ENCODE measurements at regions of chr11 and their contacts with region 1.

Region 1: DNA sequence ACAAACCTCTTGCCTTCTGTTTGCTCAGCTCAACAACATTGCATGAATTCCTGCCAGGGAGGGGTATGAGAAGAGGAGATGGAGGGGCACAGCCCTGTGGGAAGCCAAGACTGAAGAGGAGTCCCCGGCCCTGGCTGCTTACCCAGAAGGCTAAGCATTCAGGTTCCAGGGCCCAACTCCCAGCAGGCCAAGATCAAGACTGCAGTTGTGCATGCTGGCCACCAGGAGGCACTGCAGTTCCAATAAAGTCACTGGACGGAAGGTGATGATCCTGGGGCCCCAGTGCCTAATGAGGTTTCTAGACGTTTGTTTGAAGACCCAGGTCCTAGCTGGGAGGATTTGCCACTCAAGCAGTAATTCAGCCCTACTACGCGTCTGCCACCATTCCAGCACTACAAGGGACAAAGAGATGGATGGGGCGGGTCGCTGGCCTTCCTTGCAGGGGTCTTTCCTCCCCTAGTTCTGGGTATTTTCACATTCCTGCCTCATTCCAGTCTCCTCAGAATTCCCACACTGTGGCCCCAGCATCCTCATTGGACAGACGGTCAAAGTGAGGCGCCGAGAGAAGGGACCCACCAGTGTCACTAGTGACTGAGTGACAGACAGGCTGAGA is 23.6 kb downstream of the ALX4 start:
- DNase-seq: peak; percentile 38
- H3K4me3 Mint-ChIP-seq: no peak overlapping the region
- H3K27ac Mint-ChIP-seq: no peak overlapping the region
- H3K4me1 Mint-ChIP-seq: no peaks in the 10 kb centered on the region
- H3K27me3 Mint-ChIP-seq: peaks cover 14% of the 10 kb centered on the region

Region 2: GRCh38 chr11:43298397-43298796 is 988.0 kb before region 1 on chr11:
- intact Hi-C with region 1: no loop called
- DNase-seq: no peak
- H3K4me3 Mint-ChIP-seq: no peak overlapping the region
- H3K27ac Mint-ChIP-seq: no peak overlapping the region
- H3K4me1 Mint-ChIP-seq: no peaks in the 10 kb centered on the region
- H3K27me3 Mint-ChIP-seq: peaks cover 5% of the 10 kb centered on the region

Region 3: DNA sequence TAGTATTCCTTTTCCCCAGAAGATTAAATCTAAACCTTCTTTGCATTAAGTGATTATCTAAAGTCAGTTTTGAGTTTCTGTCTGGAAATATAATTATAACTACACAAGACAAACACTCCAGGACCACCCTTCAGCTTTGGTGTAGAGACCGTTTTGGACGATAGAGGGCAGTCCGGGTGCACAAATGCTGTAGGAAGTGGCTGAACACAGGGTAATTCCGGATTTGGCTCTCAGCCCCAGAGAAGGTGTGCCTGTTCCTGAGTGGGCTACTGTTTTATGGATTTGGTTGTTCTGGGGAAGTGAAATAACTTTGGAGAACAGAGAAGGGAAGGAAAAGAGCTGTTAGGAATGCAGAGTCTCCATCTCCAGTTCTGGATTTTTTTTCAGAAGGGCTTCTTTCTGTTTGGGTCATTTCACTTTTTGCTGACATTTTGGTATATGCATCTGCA is 176.1 kb before region 1 on chr11:
- intact Hi-C with region 1: loop called (anchors 1 kb)
- DNase-seq: peak; percentile 45
- H3K4me3 Mint-ChIP-seq: no peak overlapping the region
- H3K27ac Mint-ChIP-seq: no peak overlapping the region
- H3K4me1 Mint-ChIP-seq: peaks cover 19% of the 10 kb centered on the region
- H3K27me3 Mint-ChIP-seq: no peaks in the 10 kb centered on the region

Region 4: GRCh38 chr11:44133335-44133946 is 152.9 kb before region 1 on chr11:
- intact Hi-C with region 1: loop called (anchors 10 kb)
- DNase-seq: no peak
- H3K4me3 Mint-ChIP-seq: no peak overlapping the region
- H3K27ac Mint-ChIP-seq: no peak overlapping the region
- H3K4me1 Mint-ChIP-seq: no peaks in the 10 kb centered on the region
- H3K27me3 Mint-ChIP-seq: no peaks in the 10 kb centered on the region

Region 5: GRCh38 chr11:44519989-44520737 is 233.8 kb after region 1 on chr11:
- intact Hi-C with region 1: loop called (anchors 1 kb)
- DNase-seq: no peak
- H3K4me3 Mint-ChIP-seq: no peak overlapping the region
- H3K27ac Mint-ChIP-seq: no peak overlapping the region
- H3K4me1 Mint-ChIP-seq: peaks cover 4% of the 10 kb centered on the region
- H3K27me3 Mint-ChIP-seq: peaks cover 40% of the 10 kb centered on the region

Region 6: GRCh38 chr11:44538375-44539054 is 252.1 kb after region 1 on chr11:
- intact Hi-C with region 1: loop called (anchors 1 kb)
- DNase-seq: peak; percentile 65
- H3K4me3 Mint-ChIP-seq: no peak overlapping the region
- H3K27ac Mint-ChIP-seq: no peak overlapping the region
- H3K4me1 Mint-ChIP-seq: no peaks in the 10 kb centered on the region
- H3K27me3 Mint-ChIP-seq: peaks cover 3% of the 10 kb centered on the region

Region 7: GRCh38 chr11:44621140-44621681 is 334.8 kb after region 1 on chr11:
- intact Hi-C with region 1: loop called (anchors 10 kb)
- DNase-seq: peak; percentile 35
- H3K4me3 Mint-ChIP-seq: no peak overlapping the region
- H3K27ac Mint-ChIP-seq: no peak overlapping the region
- H3K4me1 Mint-ChIP-seq: peaks cover 36% of the 10 kb centered on the region
- H3K27me3 Mint-ChIP-seq: no peaks in the 10 kb centered on the region

Region 8: GRCh38 chr11:44911029-44911814 is 624.8 kb after region 1 on chr11:
- intact Hi-C with region 1: loop called (anchors 1 kb)
- DNase-seq: peak; percentile 70
- H3K4me3 Mint-ChIP-seq: no peak overlapping the region
- H3K27ac Mint-ChIP-seq: no peak overlapping the region
- H3K4me1 Mint-ChIP-seq: no peaks in the 10 kb centered on the region
- H3K27me3 Mint-ChIP-seq: peaks cover 4% of the 10 kb centered on the region